Posterior vena cava (tissue), 2 donors: ENCODE measurements at regions of chr6 and their contacts with region 1.

Region 1: DNA sequence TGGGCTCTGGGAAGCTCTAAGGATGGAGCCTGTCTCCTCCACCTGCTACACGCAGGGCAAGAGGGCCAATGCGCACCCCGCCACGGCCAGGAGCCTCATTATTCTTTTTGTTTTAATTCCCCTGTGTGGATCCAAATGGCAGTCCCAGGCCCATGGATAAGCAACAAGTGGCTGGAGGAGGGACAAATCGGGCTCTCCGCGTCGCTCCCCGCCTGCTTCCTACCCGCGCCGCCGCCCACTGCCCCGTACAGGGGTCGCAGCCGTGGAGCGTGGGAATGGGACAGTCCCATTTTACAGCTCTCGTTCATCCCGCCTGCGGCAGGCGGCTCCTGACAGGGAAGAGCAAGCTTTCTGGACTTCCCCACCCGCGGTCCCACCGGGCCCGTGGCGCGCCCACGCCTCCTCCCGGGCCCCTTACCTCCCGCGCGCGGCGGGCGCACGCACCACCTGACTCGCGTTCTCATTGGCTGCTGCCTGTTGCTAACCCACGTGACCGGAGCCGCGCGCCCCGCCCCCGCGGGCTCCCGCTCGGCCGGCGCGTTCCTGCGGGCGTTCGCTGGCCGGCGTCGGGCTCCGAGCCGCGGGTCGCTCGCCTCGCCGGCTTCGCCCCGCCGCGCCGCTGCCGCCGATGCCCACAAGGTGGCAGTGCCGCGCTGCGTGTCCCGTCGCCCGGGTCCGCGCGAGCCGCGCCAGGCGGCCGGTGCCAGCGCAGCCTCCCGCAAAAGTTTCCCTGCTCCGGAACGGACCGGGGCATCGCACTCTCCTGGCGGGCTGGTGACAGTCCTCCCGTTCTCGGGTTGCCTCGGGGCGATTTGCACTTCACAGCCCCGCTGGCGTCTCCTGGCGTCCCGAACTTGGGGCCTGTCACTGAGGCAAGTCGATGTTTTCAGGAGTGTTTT is 93.3 kb downstream of the CD83 start:
- DNase-seq: peak; percentile 97

Region 2: DNA sequence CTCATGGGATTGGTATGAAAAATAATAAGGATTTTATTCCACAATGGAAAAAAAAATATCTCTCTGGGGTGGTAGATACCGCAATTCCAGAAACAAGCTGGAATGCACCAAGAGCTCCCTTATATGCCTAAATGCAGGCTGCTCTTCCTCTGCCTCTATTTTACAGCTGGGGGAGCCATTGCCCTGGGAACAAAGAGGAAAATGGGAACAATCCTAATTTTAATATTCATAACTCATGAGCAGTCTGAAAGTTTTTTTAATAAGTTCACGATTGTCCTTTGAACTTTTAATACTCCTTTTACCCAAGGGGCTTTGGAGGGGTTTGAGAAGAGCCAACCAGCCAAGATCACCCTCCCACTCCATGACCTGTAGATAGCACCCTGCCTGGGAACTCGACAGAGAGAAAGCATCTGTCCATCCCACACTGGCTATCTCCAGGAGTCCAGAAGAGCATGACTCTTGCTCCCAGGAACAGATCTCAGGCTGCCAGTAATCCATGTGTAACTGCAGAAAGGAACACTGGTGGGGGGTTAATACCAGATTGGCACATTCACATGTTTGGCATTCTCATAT is 18.6 kb before region 1 on chr6:
- intact Hi-C with region 1: no loop called
- DNase-seq: no peak

Region 3: GRCh38 chr6:15389765-15390723 is 1179.1 kb after region 1 on chr6:
- intact Hi-C with region 1: loop called in 1 of 2 experiments (anchors 10 kb)
- DNase-seq: no peak